Ovary (tissue), 10 donors: ENCODE measurements at regions of chr10 and their contacts with region 1.

Region 1: GRCh38 chr10:30827531-30828120 is 198.1 kb upstream of the LYZL2 start:
- DNase-seq: no peak
- H3K4me3 ChIP-seq: no peak overlapping the region
- H3K27ac ChIP-seq: no peak overlapping the region
- H3K4me1 ChIP-seq: peaks cover under 1% of the 10 kb centered on the region
- H3K27me3 ChIP-seq: no peaks in the 10 kb centered on the region
- CTCF ChIP-seq: no peak
- EP300 ChIP-seq: no peak
- POLR2A ChIP-seq: no peak

Region 2: DNA sequence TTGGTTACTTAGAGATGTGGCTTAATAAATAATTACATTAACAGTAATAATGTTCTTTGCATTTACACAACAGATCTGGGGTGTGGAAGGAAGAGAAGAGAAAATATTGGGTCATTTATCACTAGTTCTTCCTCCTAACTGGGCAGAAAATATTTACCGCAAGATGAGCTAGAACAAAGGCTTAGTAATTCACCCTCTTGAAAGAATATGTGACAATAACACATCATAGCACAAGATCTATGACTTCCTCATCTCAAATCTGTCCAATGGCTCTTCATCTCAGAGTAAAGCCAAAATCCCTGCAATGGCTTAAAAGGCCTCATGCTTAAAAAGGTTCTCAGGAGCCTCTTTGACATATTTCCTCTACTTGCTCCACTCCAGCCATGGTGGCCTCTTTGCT is 25.4 kb after region 1 on chr10:
- intact Hi-C with region 1: loop called in 1 of 4 experiments (anchors 2 kb)
- DNase-seq: no peak
- H3K4me3 ChIP-seq: no peak overlapping the region
- H3K27ac ChIP-seq: no peak overlapping the region
- H3K4me1 ChIP-seq: peaks cover 5% of the 10 kb centered on the region
- H3K27me3 ChIP-seq: no peaks in the 10 kb centered on the region
- CTCF ChIP-seq: no peak
- EP300 ChIP-seq: no peak
- POLR2A ChIP-seq: no peak